ENCODE measurements at regions of chr6 and their contacts with region 1.

Region 1: GRCh38 chr6:157614026-157614568 is 208.9 kb upstream of the SNX9 start:
- DNase-seq: peak; percentile 65 to 91 (median 84)
- H3K4me3 ChIP-seq: no peak overlapping the region
- H3K27ac ChIP-seq: no peak overlapping the region
- H3K4me1 ChIP-seq: peaks cover 7 to 27% (median 18%) of the 10 kb centered on the region in 4 experiments
- H3K27me3 ChIP-seq: no peaks in the 10 kb centered on the region

Region 2: DNA sequence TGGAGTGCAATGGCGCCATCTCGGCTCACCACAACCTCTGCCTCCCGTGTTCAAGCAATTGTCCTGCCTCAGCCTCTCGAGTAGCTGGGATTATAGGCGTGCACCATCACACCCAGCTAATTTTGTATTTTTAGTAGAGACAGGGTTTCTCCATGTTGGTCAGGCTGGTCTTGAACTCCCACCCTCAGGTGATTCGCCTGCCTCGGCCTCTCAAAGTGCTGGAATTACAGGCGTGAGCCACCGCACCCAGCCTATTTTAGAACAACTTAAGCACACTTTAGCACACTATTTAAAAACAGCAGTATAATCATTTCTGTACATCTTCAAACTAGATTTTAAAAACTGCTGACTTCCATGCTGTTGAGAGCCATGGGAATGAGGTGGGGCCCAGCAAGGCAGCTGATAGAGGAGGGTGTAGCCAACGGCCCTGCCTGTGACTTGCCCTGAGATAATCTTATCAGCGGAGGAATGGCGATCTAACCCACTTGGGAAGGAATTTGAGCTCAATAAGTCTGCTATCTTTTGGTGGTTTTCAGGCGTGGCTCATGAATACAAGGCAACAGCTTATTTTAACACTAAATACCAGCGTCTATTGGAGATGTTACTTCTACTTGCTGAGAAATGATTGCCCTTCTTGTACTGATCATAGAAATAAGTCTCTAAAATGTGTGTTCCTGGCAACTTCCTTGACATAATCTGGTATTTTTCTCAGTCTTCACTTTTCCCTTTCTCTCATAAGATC is 221.0 kb before region 1 on chr6:
- CTCF ChIA-PET with region 1: no interaction called
- POLR2A ChIA-PET with region 1: no interaction called
- DNase-seq: peak in 2 of 3 donors; percentile 20 to 56
- H3K4me3 ChIP-seq: no peak overlapping the region
- H3K27ac ChIP-seq: no peak overlapping the region
- H3K4me1 ChIP-seq: peaks cover 0 to 15% (median 2%) of the 10 kb centered on the region in 4 experiments
- H3K27me3 ChIP-seq: no peaks in the 10 kb centered on the region

Region 3: DNA sequence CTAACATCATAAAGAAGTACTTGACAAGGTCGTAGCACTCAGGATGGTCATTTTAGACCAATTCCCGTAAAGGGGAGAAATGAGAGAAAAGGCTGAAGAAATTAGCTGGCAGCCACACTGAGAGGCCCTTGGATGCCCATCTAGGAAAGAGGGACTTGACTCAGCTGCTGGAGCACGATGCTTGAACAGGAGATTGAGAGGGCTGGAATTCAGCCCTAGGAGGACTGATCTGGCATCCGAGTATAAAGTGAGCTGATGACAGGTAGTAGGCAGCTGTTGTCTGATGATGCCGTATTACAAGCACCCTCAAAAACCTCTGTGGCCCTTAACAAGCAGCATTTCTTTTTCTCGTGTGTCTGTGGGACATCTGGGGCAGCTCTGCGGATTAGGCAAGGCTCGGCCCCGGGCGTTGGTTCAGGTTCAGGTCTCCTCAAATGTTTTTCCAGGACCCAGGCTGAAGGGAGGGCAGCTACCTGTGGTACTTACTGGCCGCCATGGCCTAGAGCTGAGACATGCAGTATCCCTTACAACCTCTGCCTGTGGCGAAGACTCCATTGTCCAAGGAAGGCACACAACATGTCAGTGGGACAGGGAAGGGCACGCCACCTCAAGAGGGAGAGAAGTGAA is 10.7 kb before region 1 on chr6:
- CTCF ChIA-PET with region 1: interaction called, 20 read pairs
- POLR2A ChIA-PET with region 1: interaction called, 3 read pairs
- DNase-seq: no peak
- H3K4me3 ChIP-seq: no peak overlapping the region
- H3K27ac ChIP-seq: no peak overlapping the region
- H3K4me1 ChIP-seq: peaks cover 0 to 12% (median 7%) of the 10 kb centered on the region in 4 experiments
- H3K27me3 ChIP-seq: no peaks in the 10 kb centered on the region

Region 4: DNA sequence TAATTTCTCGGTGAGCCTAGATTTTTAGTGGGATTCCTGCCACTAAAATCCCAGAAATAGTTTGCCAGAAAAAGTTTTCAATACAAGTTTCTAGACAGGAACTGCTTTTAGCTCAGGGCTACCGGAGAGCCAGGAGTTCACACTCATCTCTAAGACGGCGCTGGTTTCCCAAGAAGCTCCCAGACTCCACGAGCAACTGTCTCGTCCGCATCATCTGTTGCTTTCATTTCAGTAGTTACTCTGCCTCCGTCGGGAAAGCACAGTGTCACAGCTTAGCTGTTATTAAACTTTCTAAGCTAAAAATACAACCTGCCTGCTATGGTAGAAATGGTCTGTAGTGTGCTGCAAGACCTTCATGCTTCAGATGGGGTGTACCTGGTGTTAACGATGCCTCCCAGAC is 11.7 kb after region 1 on chr6:
- CTCF ChIA-PET with region 1: interaction called, 17 read pairs
- POLR2A ChIA-PET with region 1: no interaction called
- DNase-seq: no peak
- H3K4me3 ChIP-seq: no peak overlapping the region
- H3K27ac ChIP-seq: no peak overlapping the region
- H3K4me1 ChIP-seq: peaks cover 7 to 22% (median 13%) of the 10 kb centered on the region in 4 experiments
- H3K27me3 ChIP-seq: no peaks in the 10 kb centered on the region

Region 5: GRCh38 chr6:158049055-158050028 is 435.2 kb after region 1 on chr6:
- CTCF ChIA-PET with region 1: no interaction called
- POLR2A ChIA-PET with region 1: no interaction called
- DNase-seq: peak in 1 of 3 donors; percentile 36
- H3K4me3 ChIP-seq: no peak overlapping the region
- H3K27ac ChIP-seq: no peak overlapping the region
- H3K4me1 ChIP-seq: peaks cover 0 to 10% (median 0%) of the 10 kb centered on the region in 4 experiments
- H3K27me3 ChIP-seq: no peaks in the 10 kb centered on the region

Measured in common myeloid progenitor, CD34-positive (primary cell).